ENCODE measurements at regions of chr20 and their contacts with region 1.

Region 1: DNA sequence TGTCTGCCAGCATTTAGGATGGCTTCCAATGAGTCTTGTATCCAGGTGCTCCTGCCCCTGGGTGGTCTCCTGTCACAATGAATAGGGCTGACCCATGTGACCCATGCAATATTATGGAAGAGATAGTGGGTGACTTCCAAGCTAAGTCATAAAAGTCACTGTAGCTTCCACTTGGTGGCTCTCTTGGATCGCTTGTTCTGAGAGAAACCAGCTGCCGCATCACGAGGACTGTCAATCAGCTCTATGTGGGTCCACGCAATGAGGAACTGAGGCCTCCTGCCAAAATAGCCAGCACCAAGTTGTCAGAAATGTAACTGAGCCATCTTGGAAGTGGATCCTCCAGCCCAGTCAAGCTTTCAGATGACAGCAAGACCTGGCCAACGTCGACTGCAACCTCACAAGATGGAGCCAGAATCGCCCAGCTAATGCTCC is 14.9 kb upstream of the MATN4 start:
- DNase-seq: peak; percentile 95 to 98
- ATAC-seq: peak; percentile 84 to 89
- H3K4me3 ChIP-seq: no peak overlapping the region
- H3K27ac ChIP-seq: peak overlapping the region; percentile 90 to 100 (median 92)
- H3K4me1 ChIP-seq: no peaks in the 10 kb centered on the region
- H3K27me3 ChIP-seq: no peaks in the 10 kb centered on the region
- CTCF ChIP-seq: peak; percentile 53 to 69 (median 60)
- POLR2A ChIP-seq: no peak

Region 2: GRCh38 chr20:45341939-45342859 is 19.2 kb after region 1 on chr20:
- in situ Hi-C with region 1: no loop called
- intact Hi-C with region 1: loop called (anchors 2 kb)
- DNase-seq: peak; percentile 89 to 96
- ATAC-seq: peak; percentile 42 to 50
- H3K4me3 ChIP-seq: peak overlapping the region; percentile 48 to 97 (median 75)
- H3K27ac ChIP-seq: peak overlapping the region; percentile 90 to 100 (median 98)
- H3K4me1 ChIP-seq: peaks cover 78 to 94% of the 10 kb centered on the region in 2 donors
- H3K27me3 ChIP-seq: no peaks in the 10 kb centered on the region
- CTCF ChIP-seq: no peak
- POLR2A ChIP-seq: peak; percentile 88 to 91

Region 3: DNA sequence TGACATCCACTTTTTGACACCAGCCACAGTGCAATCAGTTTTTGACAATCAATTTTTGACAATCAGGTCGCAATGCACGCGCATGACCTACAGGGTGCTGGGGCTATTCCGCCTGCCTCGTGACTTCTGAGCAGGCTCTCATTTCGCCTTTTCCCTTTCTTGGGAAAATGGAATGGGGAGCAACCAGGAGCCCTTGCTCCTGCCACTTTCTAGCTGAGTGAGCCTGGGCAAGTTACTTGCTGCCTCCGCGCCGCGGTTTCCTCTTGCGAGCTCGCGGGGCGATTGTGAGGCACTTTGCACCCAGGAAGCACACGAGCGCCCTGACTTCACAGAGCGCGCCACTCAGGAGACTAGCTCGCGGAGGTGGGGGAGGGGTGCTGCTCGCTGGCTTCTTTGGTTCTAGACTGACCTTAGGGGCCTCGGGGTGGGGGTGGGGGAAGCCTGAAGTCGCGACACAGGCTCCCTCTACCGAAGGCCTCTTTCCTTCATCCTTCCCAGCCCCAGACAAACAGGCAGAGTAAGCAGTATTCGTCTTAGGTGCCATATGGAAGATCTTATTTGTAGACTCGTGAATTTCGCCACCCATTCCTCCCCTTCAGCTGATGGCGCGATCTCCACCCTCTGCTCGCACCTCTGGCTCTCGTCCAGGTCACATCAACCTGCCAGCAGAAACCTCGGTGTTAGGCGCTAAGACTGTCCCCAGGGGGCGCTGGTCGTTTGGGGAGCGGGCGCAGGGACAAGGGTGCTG is 50.6 kb after region 1 on chr20:
- in situ Hi-C with region 1: loop called in 2 of 4 experiments (anchors 5 to 10 kb)
- intact Hi-C with region 1: loop called (anchors 1 kb)
- DNase-seq: peak; percentile 69 to 79
- ATAC-seq: peak; percentile 82 to 86
- H3K4me3 ChIP-seq: peak overlapping the region; percentile 63 to 70 (median 64)
- H3K27ac ChIP-seq: peak overlapping the region; percentile 79 to 83 (median 80)
- H3K4me1 ChIP-seq: peaks cover 6 to 12% of the 10 kb centered on the region in 2 donors
- H3K27me3 ChIP-seq: no peaks in the 10 kb centered on the region
- CTCF ChIP-seq: peak; percentile 85 to 91 (median 88)
- POLR2A ChIP-seq: no peak

Region 4: GRCh38 chr20:45415774-45416637 is 93.0 kb after region 1 on chr20 and contains the start of gene PIGT:
- in situ Hi-C with region 1: no loop called
- intact Hi-C with region 1: loop called (anchors 1 kb)
- DNase-seq: peak; percentile 81 to 84
- ATAC-seq: peak; percentile 96 to 97
- H3K4me3 ChIP-seq: peak within 1 kb of the TSS; percentile 81 to 99 (median 97)
- H3K27ac ChIP-seq: peak within 1 kb of the TSS; percentile 82 to 92 (median 87)
- H3K4me1 ChIP-seq: peaks cover 31 to 37% of the 10 kb centered on the region in 2 donors
- H3K27me3 ChIP-seq: no peaks in the 10 kb centered on the region
- CTCF ChIP-seq: peak in 1 of 5 experiments; percentile 13
- POLR2A ChIP-seq: peak; percentile 83
- total RNA-seq, gene PIGT: 45.9 to 118 (median 94.2) TPM

Region 5: DNA sequence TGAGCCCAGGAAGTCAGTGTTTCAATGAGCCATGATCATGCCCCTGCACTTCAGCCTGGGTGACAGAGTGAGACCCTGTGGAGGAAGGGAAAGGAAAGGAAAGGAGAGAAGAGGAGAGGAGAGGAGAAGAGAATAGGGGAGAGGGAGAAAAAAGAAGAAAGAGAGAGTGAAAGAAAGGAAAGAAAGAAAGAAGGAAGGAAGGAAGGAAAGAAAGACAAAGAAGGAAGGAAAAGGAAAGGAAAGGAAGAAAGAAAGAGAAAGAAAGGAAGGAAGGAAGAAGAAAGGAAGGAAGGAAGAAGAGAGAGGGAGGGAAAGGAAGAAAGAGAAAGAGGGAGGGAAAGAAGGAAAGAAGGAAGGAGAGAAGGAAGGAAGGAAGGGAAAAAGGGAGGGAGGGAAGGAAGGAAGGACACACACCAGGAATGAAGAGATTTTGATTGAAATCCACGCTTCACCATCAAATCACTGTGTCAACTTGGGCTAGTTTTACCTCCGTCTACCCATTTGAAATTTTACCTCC is 241.8 kb after region 1 on chr20:
- in situ Hi-C with region 1: no loop called
- intact Hi-C with region 1: no loop called
- DNase-seq: no peak
- ATAC-seq: no peak
- H3K4me3 ChIP-seq: no peak overlapping the region
- H3K27ac ChIP-seq: no peak overlapping the region
- H3K4me1 ChIP-seq: no peaks in the 10 kb centered on the region
- H3K27me3 ChIP-seq: no peaks in the 10 kb centered on the region
- CTCF ChIP-seq: no peak
- POLR2A ChIP-seq: no peak

Region 6: GRCh38 chr20:45765980-45766379 is 443.0 kb after region 1 on chr20:
- in situ Hi-C with region 1: loop called (anchors 5 to 10 kb)
- intact Hi-C with region 1: loop called (anchors 1 kb)
- DNase-seq: no peak
- ATAC-seq: no peak
- H3K4me3 ChIP-seq: no peak overlapping the region
- H3K27ac ChIP-seq: no peak overlapping the region
- H3K4me1 ChIP-seq: peaks cover 0 to under 1% of the 10 kb centered on the region in 2 donors
- H3K27me3 ChIP-seq: no peaks in the 10 kb centered on the region
- CTCF ChIP-seq: no peak
- POLR2A ChIP-seq: no peak